ENCODE measurements at regions of chr1 and their contacts with region 1.

Region 1: GRCh38 chr1:228139944-228140656 is at the start of gene GUK1:
- DNase-seq: peak; percentile 99 to 100 (median 99)
- H3K4me3 ChIP-seq: peak within 1 kb of the TSS; percentile 83
- H3K27ac ChIP-seq: peak within 1 kb of the TSS; percentile 49 to 88
- H3K4me1 ChIP-seq: peaks cover 16% of the 10 kb centered on the region
- H3K27me3 ChIP-seq: no peaks in the 10 kb centered on the region
- CTCF ChIP-seq: peak; percentile 20 to 62 (median 55)
- EP300 ChIP-seq: peak; percentile 81
- POLR2A ChIP-seq: peak; percentile 96
- total RNA-seq, gene GUK1: 129 to 256 (median 171) TPM

Region 2: DNA sequence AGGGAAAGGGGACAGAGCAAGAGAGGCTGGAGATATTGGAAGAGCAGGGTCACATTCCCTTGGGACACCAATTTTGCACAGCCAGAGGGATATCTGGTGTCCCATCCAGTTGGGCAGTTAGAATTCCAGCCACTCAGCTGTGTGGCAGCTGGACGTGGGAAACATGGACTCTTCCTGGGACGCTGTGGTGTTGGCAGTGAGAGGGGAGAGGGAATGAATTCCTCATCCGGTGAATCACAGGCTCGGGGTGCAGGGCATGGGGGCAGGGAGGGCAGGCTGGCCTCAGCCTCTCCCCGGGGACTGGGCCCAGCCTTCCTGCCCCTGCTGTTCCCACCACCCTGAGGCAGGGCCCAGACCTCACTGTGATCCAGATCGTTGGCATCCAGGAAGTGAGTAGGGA is 124.8 kb before region 1 on chr1:
- intact Hi-C with region 1: no loop called
- DNase-seq: peak in 1 of 5 donors; percentile 7
- H3K4me3 ChIP-seq: no peak overlapping the region
- H3K27ac ChIP-seq: no peak overlapping the region
- H3K4me1 ChIP-seq: no peaks in the 10 kb centered on the region
- H3K27me3 ChIP-seq: no peaks in the 10 kb centered on the region
- CTCF ChIP-seq: no peak
- EP300 ChIP-seq: no peak
- POLR2A ChIP-seq: no peak

Region 3: GRCh38 chr1:228486596-228487335 is 346.7 kb after region 1 on chr1:
- intact Hi-C with region 1: loop called in 1 of 4 experiments (anchors 10 kb)
- DNase-seq: peak; percentile 61 to 81 (median 75)
- H3K4me3 ChIP-seq: peak overlapping the region; percentile 73
- H3K27ac ChIP-seq: peak overlapping the region; percentile 94 to 99
- H3K4me1 ChIP-seq: peaks cover 12% of the 10 kb centered on the region
- H3K27me3 ChIP-seq: no peaks in the 10 kb centered on the region
- CTCF ChIP-seq: peak in 1 of 3 donors; percentile 48
- EP300 ChIP-seq: no peak
- POLR2A ChIP-seq: peak; percentile 30

Region 4: GRCh38 chr1:228884615-228885566 is 744.8 kb after region 1 on chr1:
- intact Hi-C with region 1: no loop called
- DNase-seq: no peak
- H3K4me3 ChIP-seq: no peak overlapping the region
- H3K27ac ChIP-seq: no peak overlapping the region
- H3K4me1 ChIP-seq: no peaks in the 10 kb centered on the region
- H3K27me3 ChIP-seq: no peaks in the 10 kb centered on the region
- CTCF ChIP-seq: no peak
- EP300 ChIP-seq: no peak
- POLR2A ChIP-seq: no peak

Measured in ovary (tissue), 10 donors.